ENCODE measurements at regions of chr13 and their contacts with region 1.

Region 1: DNA sequence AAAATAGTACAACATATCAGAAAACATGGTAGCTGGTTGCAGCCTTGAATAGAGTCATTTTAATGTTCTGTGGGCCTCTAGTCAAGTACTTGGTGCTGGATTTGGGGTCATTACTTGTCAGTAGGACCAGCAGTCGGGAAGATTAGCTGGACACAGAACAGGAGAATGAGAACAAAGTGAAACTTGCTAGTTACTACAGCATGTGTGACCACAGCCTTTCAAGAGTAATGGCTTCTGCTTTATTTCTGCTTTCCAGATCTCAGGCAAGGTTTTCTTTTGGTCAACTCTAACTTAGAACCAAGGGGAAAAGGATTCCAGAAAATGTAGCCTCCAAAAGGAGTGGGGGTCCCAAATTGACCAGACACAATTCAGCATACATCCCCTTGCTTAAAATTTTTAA is 17.1 kb upstream of the VWA8 start:
- DNase-seq: no peak
- ATAC-seq: no peak

Region 2: GRCh38 chr13:41788552-41788951 is 189.5 kb before region 1 on chr13:
- intact Hi-C with region 1: no loop called
- DNase-seq: no peak
- ATAC-seq: no peak

Region 3: GRCh38 chr13:43669964-43670363 is 1692.0 kb after region 1 on chr13:
- intact Hi-C with region 1: loop called (anchors 5 kb)
- DNase-seq: no peak
- ATAC-seq: no peak